GM10248 (cell line): ENCODE measurements at regions of chr2 and their contacts with region 1.

Region 1: DNA sequence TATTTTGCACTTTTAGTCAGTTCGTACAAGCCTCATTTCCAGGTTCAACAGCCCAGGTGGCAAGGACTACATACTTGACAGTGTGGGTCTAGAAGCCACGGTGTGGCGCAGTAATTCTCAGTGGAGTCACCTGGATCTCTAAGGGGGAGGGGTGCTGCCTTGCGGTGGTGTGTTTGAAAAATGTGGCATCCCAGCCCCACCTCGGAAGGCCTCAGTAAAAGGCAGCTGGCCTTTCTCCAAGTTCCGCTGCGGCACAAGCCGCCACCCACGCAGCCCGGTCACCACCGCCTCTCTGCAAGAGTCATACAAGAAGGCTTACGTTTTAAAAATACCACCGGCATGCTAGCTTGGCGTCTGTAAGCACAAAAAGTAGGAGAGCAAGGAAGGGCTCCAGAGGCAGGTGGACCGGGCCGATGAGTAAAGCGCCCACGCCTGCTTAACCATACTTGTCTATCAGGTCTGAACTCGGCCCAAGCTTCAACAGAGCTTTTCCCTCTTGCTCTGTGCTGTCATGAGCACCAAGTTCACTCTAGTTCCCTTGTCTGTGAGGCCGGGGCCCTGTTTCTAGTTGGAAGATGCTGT is 49.5 kb downstream of the SPRED2 start:
- DNase-seq: peak; percentile 81
- CTCF ChIP-seq: peak; percentile 34

Region 2: DNA sequence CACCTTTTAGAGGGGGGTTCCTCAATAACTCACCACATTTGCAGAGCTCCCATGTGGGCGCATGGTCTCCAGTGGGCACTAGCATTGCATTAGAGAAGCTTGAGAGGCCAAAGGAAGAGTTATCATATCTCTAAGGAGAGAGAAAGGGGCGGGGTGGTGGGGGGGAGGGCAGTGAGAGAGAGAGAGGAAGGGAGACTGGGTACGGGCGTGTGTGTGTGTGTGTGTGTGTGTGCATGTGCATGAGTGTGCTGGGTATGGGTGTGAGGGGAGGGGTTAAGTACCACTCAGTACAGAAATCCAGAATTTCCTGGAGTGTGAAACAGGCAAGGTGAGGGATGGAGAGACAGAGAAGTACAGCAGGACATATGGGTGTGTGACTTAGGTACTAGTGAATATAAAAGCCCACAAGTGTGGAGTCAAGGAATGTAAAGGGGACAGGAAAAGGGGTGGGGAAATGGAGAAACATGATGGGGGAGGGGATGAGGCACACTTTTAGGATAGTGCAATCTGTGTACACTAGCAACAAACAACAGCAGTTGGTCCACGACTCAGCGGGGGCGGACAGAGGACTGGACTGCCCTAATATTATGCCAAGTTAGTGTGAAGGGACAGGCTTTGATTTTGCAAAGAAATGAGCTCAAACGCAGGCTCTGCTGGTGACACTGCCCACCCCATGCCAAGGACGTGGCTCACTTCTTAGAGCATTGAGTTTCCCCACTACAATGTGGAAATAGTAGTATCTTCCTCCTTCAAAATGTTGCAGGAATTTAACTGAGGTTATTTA is 41.8 kb before region 1 on chr2:
- CTCF ChIA-PET with region 1: no interaction called
- POLR2A ChIA-PET with region 1: no interaction called
- DNase-seq: no peak
- CTCF ChIP-seq: no peak

Region 3: GRCh38 chr2:65370387-65371073 is 12.3 kb before region 1 on chr2:
- CTCF ChIA-PET with region 1: interaction called, 15 read pairs
- POLR2A ChIA-PET with region 1: no interaction called
- DNase-seq: no peak
- CTCF ChIP-seq: no peak

Region 4: DNA sequence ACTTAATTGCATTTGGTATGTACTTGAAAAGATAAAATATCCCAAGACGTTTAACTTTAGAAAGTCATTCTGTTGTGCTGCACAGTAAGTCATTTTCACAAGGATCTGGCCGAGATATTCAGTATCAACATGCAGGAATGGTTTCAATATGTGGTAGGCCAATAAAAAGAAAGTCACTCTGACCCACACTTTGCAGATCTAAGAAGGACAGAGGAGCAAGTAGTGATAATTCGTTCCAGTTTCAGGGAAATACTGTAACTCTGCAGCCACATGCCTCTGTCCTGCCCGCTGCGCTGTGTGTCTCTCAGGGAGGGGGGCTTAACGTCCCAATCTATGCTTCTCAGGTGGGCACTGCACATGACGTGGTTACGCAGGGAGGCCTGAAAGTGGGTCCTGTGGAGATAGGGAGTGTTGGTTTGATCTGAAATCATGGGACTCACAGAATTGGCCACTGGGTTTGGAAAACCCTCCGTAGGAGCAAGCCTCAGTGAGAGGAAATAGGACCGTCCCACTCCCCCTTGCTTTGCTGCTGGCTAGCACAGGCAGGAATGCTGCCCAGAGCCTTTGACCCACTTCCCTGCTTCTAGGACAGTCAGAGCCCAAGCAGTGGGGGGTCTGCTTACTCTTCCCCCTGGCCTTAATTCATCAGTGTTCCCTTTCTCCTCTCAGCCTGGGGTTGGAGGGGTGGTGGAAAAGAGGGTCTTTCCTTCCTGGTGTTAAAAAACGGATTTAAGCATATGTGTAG is 364.2 kb after region 1 on chr2:
- CTCF ChIA-PET with region 1: no interaction called
- POLR2A ChIA-PET with region 1: no interaction called
- DNase-seq: no peak
- CTCF ChIP-seq: no peak